MCF 10A (cell line): ENCODE measurements at regions of chr2 and their contacts with region 1.

Region 1: DNA sequence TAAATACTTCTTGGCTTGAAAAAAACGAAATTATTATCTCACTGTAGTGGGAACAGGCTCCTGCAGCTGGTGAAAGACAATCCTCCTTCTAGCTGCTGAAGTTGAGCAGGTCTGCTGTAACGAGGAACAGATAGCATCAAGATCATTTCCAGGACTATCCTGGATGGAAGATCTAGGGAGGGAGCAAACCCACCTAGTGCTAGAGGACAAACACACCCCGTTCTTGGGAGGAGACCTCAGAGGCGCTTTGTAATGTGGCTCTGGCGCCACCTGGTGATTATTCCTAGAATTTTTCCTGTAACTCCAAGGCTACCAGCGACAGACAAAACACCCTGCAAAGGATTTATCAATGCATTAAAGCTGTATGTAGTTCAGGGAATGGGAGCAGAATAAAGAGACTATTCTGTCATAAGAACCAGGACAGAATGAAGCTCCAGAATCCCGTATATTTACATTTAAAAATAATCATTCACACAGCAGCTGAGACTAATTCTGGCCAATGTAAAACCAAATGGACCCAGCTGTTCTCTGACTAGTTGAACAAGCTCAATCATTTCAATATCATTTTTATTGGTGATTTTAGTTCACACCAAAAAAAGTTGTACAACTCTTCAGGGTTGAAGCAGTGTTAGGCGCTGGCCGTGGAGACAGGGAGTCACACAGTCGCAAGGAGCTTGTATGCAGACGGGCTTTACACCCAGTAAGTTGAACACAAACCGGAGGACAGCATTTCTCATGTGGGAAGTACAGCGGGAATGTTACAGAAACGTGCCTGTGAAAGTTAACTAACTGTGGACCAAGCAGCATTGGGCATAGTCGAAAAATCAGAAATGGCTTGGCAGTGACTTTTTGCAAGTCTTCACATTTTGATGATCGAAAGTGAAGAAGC is 290.3 kb downstream of the TRIB2 start:
- DNase-seq: peak; percentile 78
- H3K4me3 Mint-ChIP-seq: no peak overlapping the region
- H3K27ac Mint-ChIP-seq: no peak overlapping the region
- H3K4me1 Mint-ChIP-seq: peaks cover 18% of the 10 kb centered on the region
- H3K27me3 Mint-ChIP-seq: no peaks in the 10 kb centered on the region
- CTCF ChIP-seq: peak; percentile 88

Region 2: GRCh38 chr2:11829947-11830707 is 1176.9 kb before region 1 on chr2:
- CTCF ChIA-PET with region 1: interaction called, 99 read pairs
- POLR2A ChIA-PET with region 1: interaction called, 17 read pairs
- intact Hi-C with region 1: loop called (anchors 1 kb)
- DNase-seq: peak; percentile 98
- H3K4me3 Mint-ChIP-seq: peak overlapping the region; percentile 62
- H3K27ac Mint-ChIP-seq: peak overlapping the region; percentile 46
- H3K4me1 Mint-ChIP-seq: peaks cover 11% of the 10 kb centered on the region
- H3K27me3 Mint-ChIP-seq: no peaks in the 10 kb centered on the region
- CTCF ChIP-seq: peak; percentile 58

Region 3: DNA sequence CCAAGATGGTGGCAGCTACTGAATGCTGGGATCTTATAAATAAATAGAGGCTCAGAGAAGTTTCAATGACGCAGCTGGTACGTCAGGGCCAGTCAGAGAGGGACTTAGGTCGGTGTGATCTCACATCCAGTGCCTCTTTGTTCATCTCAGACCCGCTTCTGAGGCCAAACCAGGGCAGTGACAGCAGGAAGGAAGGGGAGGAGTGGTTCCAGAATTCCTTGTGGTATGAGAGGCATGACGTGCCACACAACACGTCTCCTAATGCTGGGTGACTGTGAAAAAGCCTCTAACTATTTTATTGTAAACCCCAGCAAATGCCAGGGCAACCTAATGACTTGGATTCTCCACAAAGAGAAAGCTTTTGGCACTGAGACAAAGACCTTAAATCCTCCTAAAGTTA is 837.4 kb before region 1 on chr2:
- CTCF ChIA-PET with region 1: no interaction called
- POLR2A ChIA-PET with region 1: no interaction called
- intact Hi-C with region 1: loop called (anchors 5 kb)
- DNase-seq: no peak
- H3K4me3 Mint-ChIP-seq: no peak overlapping the region
- H3K27ac Mint-ChIP-seq: no peak overlapping the region
- H3K4me1 Mint-ChIP-seq: no peaks in the 10 kb centered on the region
- H3K27me3 Mint-ChIP-seq: no peaks in the 10 kb centered on the region
- CTCF ChIP-seq: no peak

Region 4: DNA sequence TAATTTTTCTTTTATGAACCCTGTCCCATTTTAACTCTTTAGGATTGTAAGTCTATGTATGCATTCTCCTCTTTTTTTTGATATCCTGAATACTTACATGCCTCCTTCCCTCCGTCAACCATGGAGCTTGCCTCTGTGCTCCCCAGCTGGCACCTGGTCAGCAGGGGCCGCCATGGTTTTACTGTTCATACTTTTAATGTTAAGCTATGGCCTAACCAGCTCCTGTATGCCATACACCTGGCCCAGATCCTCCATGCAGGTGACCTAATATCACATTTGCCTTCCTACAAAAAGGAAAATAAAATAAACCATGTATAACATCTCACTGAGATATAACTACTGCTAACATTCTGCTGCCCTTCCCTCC is 573.5 kb before region 1 on chr2:
- CTCF ChIA-PET with region 1: interaction called, 5 read pairs
- POLR2A ChIA-PET with region 1: no interaction called
- intact Hi-C with region 1: loop called (anchors 1 kb)
- DNase-seq: peak; percentile 35
- H3K4me3 Mint-ChIP-seq: no peak overlapping the region
- H3K27ac Mint-ChIP-seq: no peak overlapping the region
- H3K4me1 Mint-ChIP-seq: peaks cover 15% of the 10 kb centered on the region
- H3K27me3 Mint-ChIP-seq: no peaks in the 10 kb centered on the region
- CTCF ChIP-seq: no peak

Region 5: DNA sequence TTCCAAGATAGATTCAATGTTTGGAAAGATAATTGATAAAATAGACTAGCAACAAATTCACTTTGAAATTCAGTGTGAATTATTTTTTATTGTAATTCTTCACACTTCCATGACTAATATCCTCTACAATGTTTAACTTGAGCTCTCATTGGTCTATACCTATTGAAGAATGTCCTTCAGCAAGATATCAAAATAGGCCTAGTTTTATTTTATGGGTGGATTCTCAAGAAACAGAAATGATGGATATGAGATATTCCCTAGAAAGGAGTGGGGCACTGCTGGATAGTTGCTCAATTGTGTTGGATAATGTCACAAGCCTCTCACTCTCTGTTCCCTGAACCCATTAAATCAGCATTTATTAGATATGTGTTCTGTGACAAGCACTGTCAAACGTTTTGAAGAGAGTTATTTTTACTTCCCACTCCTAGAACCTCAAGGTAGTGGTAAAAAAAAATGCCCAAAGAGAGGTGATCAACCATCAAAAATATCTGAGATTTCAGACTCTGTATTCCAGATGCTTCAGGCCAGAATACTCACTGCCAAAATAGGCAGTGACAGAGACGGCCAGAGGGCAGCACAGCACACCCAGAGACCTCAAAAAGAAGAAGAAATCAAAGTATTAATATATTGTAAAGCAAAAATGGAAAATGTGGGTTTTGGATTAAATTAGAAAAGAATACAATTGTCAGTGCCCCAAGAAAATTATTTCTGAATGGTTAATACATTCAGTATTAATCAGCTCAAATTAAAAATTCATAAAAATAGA is 202.8 kb before region 1 on chr2:
- CTCF ChIA-PET with region 1: no interaction called
- POLR2A ChIA-PET with region 1: no interaction called
- intact Hi-C with region 1: loop called (anchors 5 kb)
- DNase-seq: no peak
- H3K4me3 Mint-ChIP-seq: no peak overlapping the region
- H3K27ac Mint-ChIP-seq: no peak overlapping the region
- H3K4me1 Mint-ChIP-seq: peaks cover 7% of the 10 kb centered on the region
- H3K27me3 Mint-ChIP-seq: no peaks in the 10 kb centered on the region
- CTCF ChIP-seq: no peak

Region 6: GRCh38 chr2:12854009-12854530 is 153.0 kb before region 1 on chr2:
- CTCF ChIA-PET with region 1: no interaction called
- POLR2A ChIA-PET with region 1: no interaction called
- intact Hi-C with region 1: no loop called
- DNase-seq: no peak
- H3K4me3 Mint-ChIP-seq: no peak overlapping the region
- H3K27ac Mint-ChIP-seq: no peak overlapping the region
- H3K4me1 Mint-ChIP-seq: peaks cover 8% of the 10 kb centered on the region
- H3K27me3 Mint-ChIP-seq: no peaks in the 10 kb centered on the region
- CTCF ChIP-seq: no peak

Region 7: GRCh38 chr2:12948961-12949353 is 58.1 kb before region 1 on chr2:
- CTCF ChIA-PET with region 1: interaction called, 14 read pairs
- POLR2A ChIA-PET with region 1: no interaction called
- intact Hi-C with region 1: no loop called
- DNase-seq: no peak
- H3K4me3 Mint-ChIP-seq: no peak overlapping the region
- H3K27ac Mint-ChIP-seq: no peak overlapping the region
- H3K4me1 Mint-ChIP-seq: peaks cover 6% of the 10 kb centered on the region
- H3K27me3 Mint-ChIP-seq: no peaks in the 10 kb centered on the region
- CTCF ChIP-seq: no peak

Region 8: GRCh38 chr2:12990523-12990922 is 16.6 kb before region 1 on chr2:
- CTCF ChIA-PET with region 1: interaction called, 30 read pairs
- POLR2A ChIA-PET with region 1: interaction called, 4 read pairs
- intact Hi-C with region 1: no loop called
- DNase-seq: no peak
- H3K4me3 Mint-ChIP-seq: no peak overlapping the region
- H3K27ac Mint-ChIP-seq: no peak overlapping the region
- H3K4me1 Mint-ChIP-seq: no peaks in the 10 kb centered on the region
- H3K27me3 Mint-ChIP-seq: no peaks in the 10 kb centered on the region
- CTCF ChIP-seq: peak; percentile 25